Naive thymus-derived CD4-positive, alpha-beta T cell (primary cell): ENCODE measurements at regions of chr20 and their contacts with region 1.

Region 1: DNA sequence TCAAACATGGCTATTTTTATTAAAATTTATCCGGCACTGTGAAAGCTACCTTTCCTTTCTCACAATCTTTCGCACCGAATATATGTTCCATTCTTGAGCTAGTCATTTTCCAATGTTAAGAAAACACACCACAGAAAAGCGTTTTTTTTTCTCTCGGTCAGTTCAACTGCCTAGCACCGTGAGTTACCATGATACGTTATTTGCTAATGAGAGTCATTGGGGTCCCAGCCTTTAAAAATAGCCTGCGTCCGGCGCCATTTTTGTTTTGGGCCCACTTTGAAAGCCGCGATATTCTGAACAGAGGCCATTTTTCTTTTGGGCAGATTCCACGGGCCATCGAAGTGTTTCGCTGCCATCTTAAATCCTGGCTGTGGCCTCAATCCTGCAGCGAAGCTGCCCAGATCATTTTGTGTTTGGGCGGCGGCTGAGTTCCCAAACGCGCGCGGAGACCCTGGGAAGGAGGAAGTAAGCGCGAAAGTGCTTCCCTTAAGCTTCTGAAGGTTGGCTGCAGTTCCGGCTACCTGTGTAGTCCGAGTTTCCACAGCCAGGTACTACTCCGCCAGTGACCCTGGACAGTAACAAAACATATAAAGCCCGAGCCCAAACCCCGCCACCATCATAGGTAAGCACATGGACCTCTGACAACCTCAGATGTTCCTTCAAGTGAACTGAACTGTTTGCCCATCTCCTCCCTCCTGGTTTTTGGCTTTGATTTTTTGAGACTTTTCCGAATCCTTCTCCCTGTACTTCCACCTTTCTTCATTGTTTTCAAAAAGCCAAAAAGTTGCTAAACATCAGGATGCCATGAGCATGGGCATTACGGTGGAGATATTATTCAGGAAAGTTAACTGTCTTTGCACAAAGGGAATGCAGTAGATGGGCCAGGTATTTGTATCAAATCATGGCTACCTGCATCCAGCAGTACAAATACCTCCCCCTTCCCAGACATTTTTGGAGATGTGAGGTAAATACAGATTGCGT is at the start of gene SLX4IP:
- DNase-seq: peak; percentile 46 to 85 (median 82)
- ATAC-seq: peak; percentile 76
- H3K4me3 ChIP-seq: peak within 1 kb of the TSS; percentile 99
- H3K4me3 Mint-ChIP-seq: peak within 1 kb of the TSS; percentile 89 to 99 (median 96)
- H3K27ac ChIP-seq: peak within 1 kb of the TSS; percentile 82
- H3K27ac Mint-ChIP-seq: peak within 1 kb of the TSS; percentile 90 to 99 (median 97)
- H3K4me1 ChIP-seq: peaks cover 0 to 4% of the 10 kb centered on the region in 2 donors
- H3K4me1 Mint-ChIP-seq: peaks cover 30 to 59% (median 48%) of the 10 kb centered on the region in 7 donors
- H3K27me3 ChIP-seq: no peaks in the 10 kb centered on the region
- H3K27me3 Mint-ChIP-seq: no peaks in the 10 kb centered on the region
- total RNA-seq, gene SLX4IP: 4.2 to 8.2 (median 6.5) TPM

Region 2: GRCh38 chr20:10034717-10035571 is 400.2 kb before region 1 on chr20 and contains the start of gene ANKEF1:
- CTCF ChIA-PET with region 1: no interaction called
- POLR2A ChIA-PET with region 1: interaction called, 7 read pairs
- intact Hi-C with region 1: loop called (anchors 1 kb)
- DNase-seq: peak; percentile 62 to 88 (median 81)
- ATAC-seq: peak; percentile 99
- H3K4me3 ChIP-seq: peak within 1 kb of the TSS; percentile 87
- H3K4me3 Mint-ChIP-seq: peak within 1 kb of the TSS; percentile 60 to 88 (median 79)
- H3K27ac ChIP-seq: peak within 1 kb of the TSS; percentile 71
- H3K27ac Mint-ChIP-seq: peak within 1 kb of the TSS; percentile 21 to 88 (median 73)
- H3K4me1 ChIP-seq: peaks cover 8 to 12% of the 10 kb centered on the region in 2 donors
- H3K4me1 Mint-ChIP-seq: peaks cover 6 to 27% (median 13%) of the 10 kb centered on the region in 7 donors
- H3K27me3 ChIP-seq: no peaks in the 10 kb centered on the region
- H3K27me3 Mint-ChIP-seq: peaks cover 6 to 11% (median 10%) of the 10 kb centered on the region in 5 donors
- total RNA-seq, gene ANKEF1: 1.5 to 6.7 (median 2.9) TPM

Region 3: DNA sequence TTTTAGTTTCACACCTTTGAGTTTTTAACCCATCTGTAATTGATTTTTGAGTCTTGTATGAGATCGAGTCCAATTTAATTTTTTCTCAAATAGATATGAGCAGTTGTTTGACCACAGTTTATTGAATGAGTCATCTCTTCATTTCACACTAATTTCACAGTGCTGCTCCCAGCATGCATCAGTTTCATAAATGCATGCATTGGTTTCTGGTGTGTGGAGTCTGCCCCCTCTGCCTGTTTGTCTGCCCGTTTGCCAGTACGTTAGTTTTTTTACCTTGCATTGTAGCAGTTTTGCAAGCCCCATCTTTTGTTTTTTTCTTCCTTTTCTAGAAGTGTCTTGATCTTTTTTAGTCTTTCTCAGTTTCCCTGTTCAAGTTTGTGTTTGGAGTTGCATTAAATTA is 11.9 kb after region 1 on chr20:
- CTCF ChIA-PET with region 1: no interaction called
- POLR2A ChIA-PET with region 1: interaction called, 3 read pairs
- intact Hi-C with region 1: loop called (anchors 1 kb)
- DNase-seq: peak in 2 of 9 donors; percentile 23 to 30
- ATAC-seq: peak; percentile 92
- H3K4me3 ChIP-seq: no peak overlapping the region
- H3K4me3 Mint-ChIP-seq: peak overlapping the region in 9 of 10 donors; percentile 4 to 74 (median 62)
- H3K27ac ChIP-seq: no peak overlapping the region
- H3K27ac Mint-ChIP-seq: peak overlapping the region in 7 of 9 donors; percentile 9 to 74 (median 57)
- H3K4me1 ChIP-seq: no peaks in the 10 kb centered on the region
- H3K4me1 Mint-ChIP-seq: peaks cover 14 to 34% (median 25%) of the 10 kb centered on the region in 7 donors
- H3K27me3 ChIP-seq: no peaks in the 10 kb centered on the region
- H3K27me3 Mint-ChIP-seq: no peaks in the 10 kb centered on the region

Region 4: DNA sequence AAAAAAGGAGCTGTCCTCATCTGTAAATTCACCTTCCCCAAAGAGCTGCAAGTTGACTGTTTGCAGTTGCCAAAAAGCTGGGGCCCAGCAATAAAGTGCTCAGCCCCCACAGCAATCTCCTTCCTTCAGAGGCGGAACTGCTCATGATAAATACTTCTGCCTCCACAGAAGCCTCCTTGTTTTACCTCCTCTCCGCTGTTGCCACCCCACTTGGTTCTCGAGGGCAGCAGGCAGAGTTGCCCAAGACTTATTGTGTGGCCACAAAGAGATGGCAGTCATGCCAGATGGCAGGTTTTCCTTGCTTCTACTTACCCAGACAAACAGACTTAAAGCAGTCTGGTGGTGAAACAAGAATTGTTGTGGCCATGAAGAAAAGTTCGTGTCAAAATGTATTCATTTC is 66.3 kb after region 1 on chr20:
- CTCF ChIA-PET with region 1: no interaction called
- POLR2A ChIA-PET with region 1: interaction called, 3 read pairs
- intact Hi-C with region 1: loop called (anchors 1 to 2 kb)
- DNase-seq: peak in 5 of 9 donors; percentile 8 to 31 (median 21)
- ATAC-seq: peak; percentile 61
- H3K4me3 ChIP-seq: peak overlapping the region; percentile 54
- H3K4me3 Mint-ChIP-seq: peak overlapping the region; percentile 68 to 91 (median 88)
- H3K27ac ChIP-seq: peak overlapping the region; percentile 63
- H3K27ac Mint-ChIP-seq: peak overlapping the region; percentile 71 to 96 (median 91)
- H3K4me1 ChIP-seq: peaks cover 0 to 5% of the 10 kb centered on the region in 2 donors
- H3K4me1 Mint-ChIP-seq: peaks cover 34 to 60% (median 40%) of the 10 kb centered on the region in 7 donors
- H3K27me3 ChIP-seq: no peaks in the 10 kb centered on the region
- H3K27me3 Mint-ChIP-seq: no peaks in the 10 kb centered on the region

Region 5: DNA sequence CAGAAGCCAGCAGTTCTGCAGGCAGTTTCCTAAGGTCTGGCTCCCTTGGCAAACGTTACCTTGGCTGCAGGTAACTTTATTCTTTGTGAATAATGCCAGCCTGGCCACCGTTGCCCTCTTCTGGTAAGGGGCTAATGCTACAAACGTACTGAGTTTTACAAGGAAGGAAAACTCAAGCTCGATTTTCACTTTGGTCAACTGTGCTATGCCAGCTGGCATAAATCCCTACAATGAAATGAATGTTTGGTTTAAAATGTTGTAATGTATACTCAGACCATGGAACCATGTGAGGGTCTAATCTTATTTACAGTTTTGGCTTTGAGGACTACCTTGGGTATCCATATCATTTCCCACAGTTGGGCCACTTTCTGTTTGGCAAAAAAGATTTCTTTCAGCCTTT is 101.4 kb after region 1 on chr20:
- CTCF ChIA-PET with region 1: no interaction called
- POLR2A ChIA-PET with region 1: no interaction called
- intact Hi-C with region 1: loop called (anchors 2 kb)
- DNase-seq: peak in 1 of 9 donors; percentile 9
- ATAC-seq: no peak
- H3K4me3 ChIP-seq: no peak overlapping the region
- H3K4me3 Mint-ChIP-seq: no peak overlapping the region
- H3K27ac ChIP-seq: no peak overlapping the region
- H3K27ac Mint-ChIP-seq: no peak overlapping the region
- H3K4me1 ChIP-seq: peaks cover 0 to 13% of the 10 kb centered on the region in 2 donors
- H3K4me1 Mint-ChIP-seq: peaks cover 10 to 34% (median 25%) of the 10 kb centered on the region in 7 donors
- H3K27me3 ChIP-seq: no peaks in the 10 kb centered on the region
- H3K27me3 Mint-ChIP-seq: no peaks in the 10 kb centered on the region

Region 6: GRCh38 chr20:11890331-11891080 is 1455.4 kb after region 1 on chr20:
- CTCF ChIA-PET with region 1: no interaction called
- POLR2A ChIA-PET with region 1: no interaction called
- intact Hi-C with region 1: loop called in 1 of 2 experiments (anchors 5 kb)
- DNase-seq: peak in 8 of 9 donors; percentile 29 to 80 (median 44)
- ATAC-seq: peak; percentile 74
- H3K4me3 ChIP-seq: peak overlapping the region; percentile 26
- H3K4me3 Mint-ChIP-seq: peak overlapping the region; percentile 71 to 90 (median 82)
- H3K27ac ChIP-seq: no peak overlapping the region
- H3K27ac Mint-ChIP-seq: peak overlapping the region in 5 of 9 donors; percentile 1 to 71 (median 43)
- H3K4me1 ChIP-seq: no peaks in the 10 kb centered on the region
- H3K4me1 Mint-ChIP-seq: peaks cover 0 to 24% (median 20%) of the 10 kb centered on the region in 7 donors
- H3K27me3 ChIP-seq: no peaks in the 10 kb centered on the region
- H3K27me3 Mint-ChIP-seq: peaks cover 0 to 30% (median 21%) of the 10 kb centered on the region in 5 donors